ENCODE measurements at regions of chr11 and their contacts with region 1.

Region 1: DNA sequence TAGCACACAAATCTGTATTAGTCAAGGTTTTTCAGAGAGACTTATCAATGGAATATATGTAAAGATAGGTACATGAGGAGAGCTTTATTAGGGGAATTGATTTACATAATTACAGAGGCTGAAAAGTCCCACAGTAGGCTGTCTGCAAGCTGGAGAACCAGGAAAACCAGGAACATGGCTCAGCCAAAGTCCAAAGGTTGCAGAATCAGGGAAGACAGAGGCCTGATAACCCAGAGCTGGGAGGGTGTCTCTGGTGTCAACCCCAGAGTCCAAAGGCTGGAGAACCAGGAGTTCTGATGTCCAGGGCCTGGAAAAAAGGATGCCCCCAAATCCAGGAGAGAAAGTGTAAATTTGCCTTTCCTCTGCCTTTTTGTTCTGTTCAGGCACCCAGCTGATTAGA is 16.3 kb upstream of the OR5F1 start:
- DNase-seq: no peak
- ATAC-seq: no peak
- H3K4me3 ChIP-seq: no peak overlapping the region
- H3K27ac ChIP-seq: no peak overlapping the region
- H3K4me1 ChIP-seq: no peaks in the 10 kb centered on the region
- H3K27me3 ChIP-seq: no peaks in the 10 kb centered on the region
- CTCF ChIP-seq: no peak

Region 2: DNA sequence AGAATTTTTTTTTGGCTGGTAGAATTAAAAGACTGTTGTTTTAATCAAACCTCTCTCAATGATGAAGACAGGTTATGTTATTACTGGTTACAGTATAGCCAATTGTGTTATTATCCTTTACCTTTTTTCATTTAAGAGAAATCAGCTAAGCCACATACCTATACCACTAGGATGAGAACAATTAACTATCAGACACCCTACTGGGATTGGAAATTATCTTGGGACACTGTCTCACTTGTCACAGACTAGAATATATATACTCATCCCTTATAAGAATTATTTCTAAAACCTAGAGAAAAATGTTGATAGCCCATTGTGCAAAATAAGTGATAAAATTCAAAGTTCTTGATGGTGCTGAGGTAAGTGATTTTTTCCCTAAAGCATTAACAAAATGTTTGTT is 16.6 kb after region 1 on chr11 and contains the start of gene OR5AS1:
- intact Hi-C with region 1: loop called in 1 of 10 experiments (anchors 1 kb)
- DNase-seq: no peak
- ATAC-seq: no peak
- H3K4me3 ChIP-seq: no peak within 1 kb of the TSS
- H3K27ac ChIP-seq: no peak within 1 kb of the TSS
- H3K4me1 ChIP-seq: no peaks in the 10 kb centered on the region
- H3K27me3 ChIP-seq: no peaks in the 10 kb centered on the region
- CTCF ChIP-seq: no peak
- total RNA-seq, gene OR5AS1: not detected

Region 3: GRCh38 chr11:56855217-56855616 is 844.5 kb after region 1 on chr11:
- intact Hi-C with region 1: no loop called
- DNase-seq: no peak
- ATAC-seq: no peak
- H3K4me3 ChIP-seq: no peak overlapping the region
- H3K27ac ChIP-seq: no peak overlapping the region
- H3K4me1 ChIP-seq: no peaks in the 10 kb centered on the region
- H3K27me3 ChIP-seq: peaks cover 0 to 6% (median 0%) of the 10 kb centered on the region in 7 donors
- CTCF ChIP-seq: no peak

Measured in heart right ventricle (tissue), 16 donors.